ENCODE measurements at regions of chr16 and their contacts with region 1.

Region 1: GRCh38 chr16:66650707-66651473 is 45.7 kb downstream of the CMTM4 start:
- DNase-seq: peak; percentile 91
- ATAC-seq: peak; percentile 99
- H3K4me3 Mint-ChIP-seq: peak overlapping the region; percentile 10
- H3K27ac Mint-ChIP-seq: no peak overlapping the region
- H3K4me1 Mint-ChIP-seq: peaks cover 16% of the 10 kb centered on the region
- H3K27me3 Mint-ChIP-seq: peaks cover 7% of the 10 kb centered on the region

Region 2: GRCh38 chr16:66618588-66619375 is 32.1 kb before region 1 on chr16:
- CTCF ChIA-PET with region 1: interaction called, 16 read pairs
- POLR2A ChIA-PET with region 1: interaction called, 3 read pairs
- DNase-seq: no peak
- ATAC-seq: no peak
- H3K4me3 Mint-ChIP-seq: no peak overlapping the region
- H3K27ac Mint-ChIP-seq: no peak overlapping the region
- H3K4me1 Mint-ChIP-seq: peaks cover 7% of the 10 kb centered on the region
- H3K27me3 Mint-ChIP-seq: no peaks in the 10 kb centered on the region

Region 3: GRCh38 chr16:66639091-66639885 is 11.6 kb before region 1 on chr16:
- CTCF ChIA-PET with region 1: interaction called, 37 read pairs
- POLR2A ChIA-PET with region 1: no interaction called
- DNase-seq: no peak
- ATAC-seq: no peak
- H3K4me3 Mint-ChIP-seq: no peak overlapping the region
- H3K27ac Mint-ChIP-seq: no peak overlapping the region
- H3K4me1 Mint-ChIP-seq: no peaks in the 10 kb centered on the region
- H3K27me3 Mint-ChIP-seq: peaks cover 8% of the 10 kb centered on the region

Region 4: GRCh38 chr16:66740010-66740409 is 89.1 kb after region 1 on chr16:
- CTCF ChIA-PET with region 1: interaction called, 18 read pairs
- POLR2A ChIA-PET with region 1: no interaction called
- DNase-seq: peak; percentile 56
- ATAC-seq: peak; percentile 73
- H3K4me3 Mint-ChIP-seq: no peak overlapping the region
- H3K27ac Mint-ChIP-seq: peak overlapping the region; percentile 9
- H3K4me1 Mint-ChIP-seq: peaks cover 27% of the 10 kb centered on the region
- H3K27me3 Mint-ChIP-seq: no peaks in the 10 kb centered on the region

Region 5: GRCh38 chr16:66751303-66751991 is 100.6 kb after region 1 on chr16 and contains the start of gene DYNC1LI2:
- CTCF ChIA-PET with region 1: interaction called, 13 read pairs
- POLR2A ChIA-PET with region 1: no interaction called
- DNase-seq: peak; percentile 84
- ATAC-seq: peak; percentile 84
- H3K4me3 Mint-ChIP-seq: peak within 1 kb of the TSS; percentile 80
- H3K27ac Mint-ChIP-seq: peak within 1 kb of the TSS; percentile 90
- H3K4me1 Mint-ChIP-seq: peaks cover 44% of the 10 kb centered on the region
- H3K27me3 Mint-ChIP-seq: peaks cover 17% of the 10 kb centered on the region
- total RNA-seq, gene DYNC1LI2: 56.5 to 63.1 TPM

Measured in activated CD8-positive, alpha-beta T cell treated with anti-CD3 and anti-CD28 coated beads, Interleukin-2, amount 10 ng/mL, durations not matched to agents 7 days and 5 days (primary cell).